ENCODE measurements at regions of chr19 and their contacts with region 1.

Region 1: GRCh38 chr19:54062643-54063042 is 1.1 kb downstream of the VSTM1 start:
- DNase-seq: no peak
- H3K4me3 ChIP-seq: no peak overlapping the region
- H3K27ac ChIP-seq: no peak overlapping the region
- H3K4me1 ChIP-seq: no peaks in the 10 kb centered on the region
- H3K27me3 ChIP-seq: peaks cover 0 to 5% of the 10 kb centered on the region in 2 donors
- CTCF ChIP-seq: no peak
- POLR2A ChIP-seq: no peak

Region 2: DNA sequence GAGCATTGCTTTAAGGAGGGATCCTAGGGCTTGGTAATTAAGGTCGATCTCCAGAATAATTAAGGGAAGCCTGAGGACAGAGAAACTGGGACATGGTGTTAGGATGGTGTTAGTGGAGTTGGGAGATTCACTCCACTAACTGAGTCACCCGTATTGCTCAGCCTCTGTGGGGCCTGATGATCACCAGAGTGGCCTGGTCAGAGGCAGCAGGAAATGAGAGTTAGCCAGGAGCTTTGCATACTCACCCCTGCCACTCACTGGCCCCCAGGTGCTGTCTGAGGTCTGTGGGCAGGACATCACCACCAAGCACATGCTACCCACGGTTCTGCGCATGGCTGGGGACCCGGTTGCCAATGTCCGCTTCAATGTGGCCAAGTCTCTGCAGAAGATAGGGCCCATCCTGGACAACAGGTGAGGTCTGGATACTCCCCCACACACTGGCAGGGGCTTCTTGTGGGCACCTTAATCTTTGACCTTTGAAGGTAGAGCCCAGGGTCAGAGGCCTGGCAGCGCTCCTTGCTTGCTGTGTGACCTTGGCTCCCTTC is 1840.7 kb before region 1 on chr19:
- intact Hi-C with region 1: no loop called
- DNase-seq: no peak
- H3K4me3 ChIP-seq: no peak overlapping the region
- H3K27ac ChIP-seq: no peak overlapping the region
- H3K4me1 ChIP-seq: no peaks in the 10 kb centered on the region
- H3K27me3 ChIP-seq: no peaks in the 10 kb centered on the region
- CTCF ChIP-seq: no peak
- POLR2A ChIP-seq: no peak

Region 3: DNA sequence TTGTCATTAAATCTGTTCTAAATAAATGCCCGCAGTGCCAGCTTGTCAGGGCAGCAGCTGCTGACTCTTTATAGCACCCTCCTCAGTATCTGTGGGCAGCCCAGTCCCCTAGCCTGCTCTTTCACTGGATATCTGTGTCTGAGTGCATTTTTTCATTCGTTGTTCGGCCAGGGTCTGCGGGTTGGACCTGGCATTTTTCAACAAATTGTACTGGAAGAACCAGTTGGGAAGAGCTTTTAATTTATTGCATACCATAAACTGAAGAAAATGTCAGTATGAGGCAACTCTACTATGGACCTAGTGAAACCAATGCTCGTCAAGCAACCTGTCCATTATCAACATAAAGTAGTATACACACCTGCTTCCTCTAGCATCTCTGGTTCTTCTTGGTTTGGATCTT is 1860.9 kb after region 1 on chr19:
- intact Hi-C with region 1: loop called (anchors 5 kb)
- DNase-seq: no peak
- H3K4me3 ChIP-seq: no peak overlapping the region
- H3K27ac ChIP-seq: no peak overlapping the region
- H3K4me1 ChIP-seq: no peaks in the 10 kb centered on the region
- H3K27me3 ChIP-seq: no peaks in the 10 kb centered on the region
- CTCF ChIP-seq: no peak
- POLR2A ChIP-seq: no peak